AG04449 (cell line): ENCODE measurements at regions of chr5 and their contacts with region 1.

Region 1: GRCh38 chr5:171288066-171288465 is 21.0 kb upstream of the TLX3 start:
- DNase-seq: no peak
- H3K4me3 ChIP-seq: no peak overlapping the region
- CTCF ChIP-seq: no peak

Region 2: GRCh38 chr5:171272996-171273970 is 14.8 kb before region 1 on chr5:
- CTCF ChIA-PET with region 1: interaction called, 10 read pairs
- POLR2A ChIA-PET with region 1: no interaction called
- DNase-seq: no peak
- H3K4me3 ChIP-seq: no peak overlapping the region
- CTCF ChIP-seq: peak; percentile 28

Region 3: GRCh38 chr5:171505473-171506043 is 217.5 kb after region 1 on chr5:
- CTCF ChIA-PET with region 1: no interaction called
- POLR2A ChIA-PET with region 1: no interaction called
- DNase-seq: no peak
- H3K4me3 ChIP-seq: no peak overlapping the region
- CTCF ChIP-seq: no peak